ENCODE measurements at regions of chr7 and their contacts with region 1.

Region 1: DNA sequence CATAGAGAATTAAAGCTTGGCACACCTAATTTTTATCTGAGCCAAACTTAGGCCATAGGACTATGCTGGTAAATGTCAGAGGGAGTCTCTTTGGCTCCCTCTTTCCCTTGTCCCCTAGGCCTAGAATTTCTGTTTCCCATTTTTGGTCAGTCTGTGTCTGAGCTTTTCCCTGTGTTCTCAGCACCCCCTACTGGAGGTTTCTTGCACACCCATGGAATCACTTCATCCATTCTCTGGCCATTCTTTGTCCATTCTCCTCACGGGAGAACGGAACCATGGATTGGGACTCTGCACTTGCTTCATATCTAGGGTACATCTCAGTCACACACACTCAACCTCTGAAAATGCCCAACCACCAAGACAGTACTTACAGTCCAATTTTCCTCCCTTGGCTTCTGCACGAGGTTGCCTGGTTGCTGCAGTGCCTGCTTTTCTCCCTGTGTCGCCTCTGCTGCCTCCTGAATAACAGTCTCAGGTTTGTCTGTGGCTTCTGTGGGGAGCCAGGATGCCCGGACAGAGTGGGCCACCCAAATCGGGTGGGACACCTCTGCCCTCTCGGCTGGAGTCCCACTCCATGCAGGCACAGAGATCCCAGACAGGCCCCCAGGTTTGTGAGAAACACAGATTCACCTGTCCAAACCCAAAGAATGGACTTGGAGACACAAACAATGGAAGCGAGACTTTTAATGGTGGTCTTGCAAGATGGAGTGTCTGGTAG is 35.1 kb upstream of the DNAH11 start:
- DNase-seq: peak; percentile 22 to 45 (median 35)
- H3K4me3 ChIP-seq: no peak overlapping the region
- H3K4me3 Mint-ChIP-seq: no peak overlapping the region
- H3K27ac ChIP-seq: no peak overlapping the region
- H3K27ac Mint-ChIP-seq: peak overlapping the region in 1 of 7 donors; percentile 77
- H3K4me1 ChIP-seq: no peaks in the 10 kb centered on the region
- H3K4me1 Mint-ChIP-seq: no peaks in the 10 kb centered on the region
- H3K27me3 ChIP-seq: no peaks in the 10 kb centered on the region
- H3K27me3 Mint-ChIP-seq: no peaks in the 10 kb centered on the region
- CTCF ChIP-seq: peak; percentile 78

Region 2: GRCh38 chr7:20786779-20787659 is 720.8 kb before region 1 on chr7 and contains the start of gene SP8:
- intact Hi-C with region 1: loop called in 1 of 2 experiments (anchors 10 kb)
- DNase-seq: peak in 1 of 3 donors; percentile 41
- H3K4me3 ChIP-seq: peak within 1 kb of the TSS; percentile 4 to 73 (median 17)
- H3K4me3 Mint-ChIP-seq: peak within 1 kb of the TSS; percentile 77 to 91
- H3K27ac ChIP-seq: no peak within 1 kb of the TSS
- H3K27ac Mint-ChIP-seq: no peak within 1 kb of the TSS
- H3K4me1 ChIP-seq: peaks cover 29 to 40% of the 10 kb centered on the region in 2 donors
- H3K4me1 Mint-ChIP-seq: peaks cover 38% of the 10 kb centered on the region
- H3K27me3 ChIP-seq: peaks cover 91 to 97% of the 10 kb centered on the region in 2 donors
- H3K27me3 Mint-ChIP-seq: peaks cover 85 to 98% (median 92%) of the 10 kb centered on the region in 3 donors
- CTCF ChIP-seq: no peak
- polyA plus RNA-seq, gene SP8: not detected

Region 3: GRCh38 chr7:21253740-21254687 is 253.8 kb before region 1 on chr7:
- intact Hi-C with region 1: loop called (anchors 5 kb)
- DNase-seq: peak in 1 of 3 donors; percentile 6
- H3K4me3 ChIP-seq: no peak overlapping the region
- H3K4me3 Mint-ChIP-seq: peak overlapping the region in 1 of 2 donors; percentile 52
- H3K27ac ChIP-seq: no peak overlapping the region
- H3K27ac Mint-ChIP-seq: no peak overlapping the region
- H3K4me1 ChIP-seq: no peaks in the 10 kb centered on the region
- H3K4me1 Mint-ChIP-seq: no peaks in the 10 kb centered on the region
- H3K27me3 ChIP-seq: peaks cover 54 to 56% of the 10 kb centered on the region in 2 donors
- H3K27me3 Mint-ChIP-seq: peaks cover 32 to 48% (median 40%) of the 10 kb centered on the region in 3 donors
- CTCF ChIP-seq: peak; percentile 50

Measured in CD14-positive monocyte (primary cell).